ENCODE measurements at regions of chr17 and their contacts with region 1.

Region 1: DNA sequence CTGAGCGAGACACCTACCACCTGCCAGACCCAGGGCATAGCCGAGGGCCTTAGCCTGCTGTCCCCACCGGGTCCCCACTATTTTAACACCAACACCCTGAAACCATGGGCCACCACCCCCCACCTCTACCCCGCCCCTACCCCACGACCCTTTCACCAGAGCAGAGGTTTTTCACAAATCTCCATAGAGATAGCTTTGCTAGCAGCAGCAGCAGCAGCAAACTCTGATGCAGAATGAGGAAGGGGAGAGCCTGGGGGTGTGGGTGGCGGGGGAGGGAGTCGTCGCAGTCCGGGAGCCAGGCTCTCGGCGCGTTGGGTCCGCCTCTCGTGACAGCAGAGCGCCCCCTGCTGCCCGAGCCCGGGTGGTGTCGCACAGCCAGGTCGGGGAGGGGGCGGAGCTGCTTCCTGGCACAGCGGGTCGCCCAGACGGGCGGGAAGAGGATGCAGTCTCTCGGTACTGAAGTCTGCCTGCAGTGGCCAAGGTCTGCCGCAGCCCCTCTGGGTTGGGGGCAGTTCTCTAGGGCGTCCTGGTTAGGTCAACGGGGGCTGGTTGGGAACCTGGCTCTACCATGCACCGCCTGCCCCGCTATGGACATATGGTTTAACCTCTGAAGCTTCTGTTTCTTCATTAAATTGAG is 38.1 kb upstream of the CCDC182 start:
- DNase-seq: peak; percentile 87
- ATAC-seq: peak; percentile 98
- H3K4me3 Mint-ChIP-seq: no peak overlapping the region
- H3K27ac Mint-ChIP-seq: no peak overlapping the region
- H3K4me1 Mint-ChIP-seq: no peaks in the 10 kb centered on the region
- H3K27me3 Mint-ChIP-seq: peaks cover 8% of the 10 kb centered on the region
- CTCF ChIP-seq: peak; percentile 98

Region 2: DNA sequence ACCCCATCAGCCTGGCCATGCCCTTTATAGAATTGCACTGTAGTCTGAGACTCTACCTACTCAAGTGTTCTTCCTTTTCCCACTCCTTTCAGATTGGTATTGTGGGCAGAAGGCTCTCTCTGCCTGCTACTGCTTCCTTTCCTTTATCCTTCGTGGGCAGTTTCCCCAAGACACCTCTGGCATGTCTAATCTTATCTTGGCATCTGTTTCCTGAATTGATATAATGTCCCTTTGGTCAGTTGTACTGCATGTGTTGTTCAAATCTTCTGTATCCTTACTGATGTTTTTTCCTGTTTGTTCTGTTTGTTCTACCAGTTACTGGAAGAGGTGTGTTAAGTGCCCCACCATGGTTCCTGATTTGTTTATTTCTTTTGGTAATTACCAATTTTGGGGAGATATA is 556.4 kb before region 1 on chr17:
- CTCF ChIA-PET with region 1: interaction called, 11 read pairs
- POLR2A ChIA-PET with region 1: no interaction called
- intact Hi-C with region 1: no loop called
- DNase-seq: no peak
- ATAC-seq: no peak
- H3K4me3 Mint-ChIP-seq: no peak overlapping the region
- H3K27ac Mint-ChIP-seq: no peak overlapping the region
- H3K4me1 Mint-ChIP-seq: no peaks in the 10 kb centered on the region
- H3K27me3 Mint-ChIP-seq: peaks cover 12% of the 10 kb centered on the region
- CTCF ChIP-seq: no peak

Region 3: GRCh38 chr17:57747221-57748017 is 35.8 kb before region 1 on chr17:
- CTCF ChIA-PET with region 1: interaction called, 18 read pairs
- POLR2A ChIA-PET with region 1: no interaction called
- intact Hi-C with region 1: no loop called
- DNase-seq: peak; percentile 64
- ATAC-seq: peak; percentile 89
- H3K4me3 Mint-ChIP-seq: no peak overlapping the region
- H3K27ac Mint-ChIP-seq: no peak overlapping the region
- H3K4me1 Mint-ChIP-seq: peaks cover 8% of the 10 kb centered on the region
- H3K27me3 Mint-ChIP-seq: no peaks in the 10 kb centered on the region
- CTCF ChIP-seq: peak; percentile 88

Region 4: DNA sequence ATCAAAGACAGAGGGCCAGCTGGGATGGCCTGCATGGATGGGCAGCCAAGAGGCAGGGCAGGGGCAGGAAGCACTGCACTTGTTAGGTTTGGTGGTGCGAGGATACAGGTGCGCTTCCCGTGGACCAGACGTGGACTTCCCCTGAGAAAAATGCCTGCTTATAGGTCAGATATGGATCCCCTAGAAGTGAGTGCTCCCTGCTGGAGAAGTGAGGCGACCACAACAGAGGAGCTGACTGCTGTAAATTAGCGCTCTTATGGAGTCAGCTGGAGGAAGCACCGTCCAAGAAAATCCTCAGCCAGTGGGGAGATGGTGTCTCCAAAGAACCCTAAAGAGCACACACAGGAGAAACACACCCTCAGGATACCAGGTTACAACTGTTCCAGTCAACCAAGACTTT is 10.4 kb before region 1 on chr17:
- CTCF ChIA-PET with region 1: interaction called, 37 read pairs
- POLR2A ChIA-PET with region 1: interaction called, 5 read pairs
- intact Hi-C with region 1: no loop called
- DNase-seq: no peak
- ATAC-seq: no peak
- H3K4me3 Mint-ChIP-seq: no peak overlapping the region
- H3K27ac Mint-ChIP-seq: no peak overlapping the region
- H3K4me1 Mint-ChIP-seq: no peaks in the 10 kb centered on the region
- H3K27me3 Mint-ChIP-seq: peaks cover 22% of the 10 kb centered on the region
- CTCF ChIP-seq: no peak

Region 5: GRCh38 chr17:57803025-57803424 is 19.8 kb after region 1 on chr17:
- CTCF ChIA-PET with region 1: interaction called, 25 read pairs
- POLR2A ChIA-PET with region 1: interaction called, 3 read pairs
- intact Hi-C with region 1: no loop called
- DNase-seq: no peak
- ATAC-seq: no peak
- H3K4me3 Mint-ChIP-seq: no peak overlapping the region
- H3K27ac Mint-ChIP-seq: no peak overlapping the region
- H3K4me1 Mint-ChIP-seq: peaks cover 2% of the 10 kb centered on the region
- H3K27me3 Mint-ChIP-seq: peaks cover 13% of the 10 kb centered on the region
- CTCF ChIP-seq: no peak

Region 6: DNA sequence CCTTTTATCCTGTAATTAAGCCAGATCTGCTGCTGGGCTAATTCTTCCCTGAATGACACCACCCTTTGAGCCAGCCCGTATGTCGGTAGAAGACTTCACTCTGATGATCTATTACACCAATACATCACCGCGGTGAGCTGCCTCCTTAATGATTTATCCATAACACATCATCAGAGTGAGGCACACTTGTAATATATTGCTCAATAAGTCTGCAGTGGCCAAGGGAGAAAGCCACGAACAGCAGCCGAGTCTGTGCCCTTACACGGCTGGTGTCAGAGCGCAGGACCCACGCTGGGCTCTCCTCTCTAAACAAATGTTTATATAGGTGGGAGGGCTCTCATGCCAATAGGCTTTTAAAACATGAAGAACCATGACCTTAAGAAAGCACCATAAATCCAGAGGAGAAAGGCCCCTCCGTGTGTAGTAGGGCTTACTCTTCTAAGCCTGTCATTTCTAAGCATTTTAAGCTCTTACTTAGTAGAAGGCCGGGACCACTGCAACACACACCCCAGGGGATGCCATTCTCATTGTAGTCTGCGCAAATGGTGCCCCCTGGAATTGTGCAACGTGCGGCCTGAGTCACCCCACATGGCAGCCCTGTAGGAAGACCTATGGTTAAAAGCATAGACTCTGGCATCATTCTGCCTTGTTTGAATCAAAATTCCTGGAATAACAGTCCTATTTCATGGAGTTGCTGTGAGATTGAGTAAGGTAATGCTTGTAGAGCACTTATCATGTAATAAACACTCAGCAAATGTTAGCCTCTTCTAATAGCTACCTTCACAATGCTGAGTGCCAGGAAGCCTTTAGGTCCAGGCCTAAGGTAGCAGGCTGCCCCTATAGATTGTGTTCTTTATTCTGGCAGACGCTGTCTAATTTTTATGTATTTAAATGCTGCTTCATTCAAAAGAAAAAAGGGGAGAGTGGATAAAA is 40.5 kb after region 1 on chr17:
- CTCF ChIA-PET with region 1: interaction called, 15 read pairs
- POLR2A ChIA-PET with region 1: no interaction called
- intact Hi-C with region 1: no loop called
- DNase-seq: no peak
- ATAC-seq: no peak
- H3K4me3 Mint-ChIP-seq: no peak overlapping the region
- H3K27ac Mint-ChIP-seq: no peak overlapping the region
- H3K4me1 Mint-ChIP-seq: no peaks in the 10 kb centered on the region
- H3K27me3 Mint-ChIP-seq: no peaks in the 10 kb centered on the region
- CTCF ChIP-seq: no peak

Measured in activated CD8-positive, alpha-beta T cell treated with anti-CD3 and anti-CD28 coated beads for 36 hours (primary cell).